Left cardiac atrium (tissue), 4 donors: ENCODE measurements at regions of chr6 and their contacts with region 1.

Region 1: GRCh38 chr6:152863618-152864326 is 113.2 kb downstream of the VIP start:
- DNase-seq: peak; percentile 69
- ATAC-seq: peak; percentile 82 to 83

Region 2: DNA sequence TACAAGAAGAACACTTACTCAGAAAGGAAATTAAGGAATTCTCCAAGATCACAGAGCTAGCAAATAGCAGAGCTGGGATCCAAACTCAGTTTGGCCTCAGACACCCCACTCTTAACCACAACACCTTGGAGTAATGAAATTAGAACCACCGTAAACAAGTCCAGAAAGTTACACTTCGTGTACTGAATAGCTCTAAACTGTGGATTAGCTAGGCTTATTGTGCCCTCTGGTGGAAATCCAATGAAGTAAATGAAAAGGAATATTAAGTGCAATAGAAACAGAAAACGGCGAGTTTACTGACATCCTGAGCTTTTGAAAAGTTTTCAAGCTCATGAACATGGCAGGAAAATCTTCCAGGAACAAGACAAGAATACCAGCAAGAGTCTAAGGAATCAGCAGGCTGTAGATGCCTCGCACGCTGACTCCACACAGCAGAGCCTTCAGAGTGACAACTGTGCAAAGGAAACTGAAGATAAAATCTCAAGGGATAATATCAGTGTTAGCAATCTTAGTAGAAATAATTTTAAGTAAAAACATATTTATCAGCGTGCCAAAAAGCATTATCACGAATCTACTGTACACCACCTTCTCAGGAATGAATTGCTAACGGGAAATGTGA is 84.5 kb after region 1 on chr6:
- intact Hi-C with region 1: loop called (anchors 2 to 5 kb)
- DNase-seq: no peak
- ATAC-seq: peak; percentile 57 to 69

Region 3: DNA sequence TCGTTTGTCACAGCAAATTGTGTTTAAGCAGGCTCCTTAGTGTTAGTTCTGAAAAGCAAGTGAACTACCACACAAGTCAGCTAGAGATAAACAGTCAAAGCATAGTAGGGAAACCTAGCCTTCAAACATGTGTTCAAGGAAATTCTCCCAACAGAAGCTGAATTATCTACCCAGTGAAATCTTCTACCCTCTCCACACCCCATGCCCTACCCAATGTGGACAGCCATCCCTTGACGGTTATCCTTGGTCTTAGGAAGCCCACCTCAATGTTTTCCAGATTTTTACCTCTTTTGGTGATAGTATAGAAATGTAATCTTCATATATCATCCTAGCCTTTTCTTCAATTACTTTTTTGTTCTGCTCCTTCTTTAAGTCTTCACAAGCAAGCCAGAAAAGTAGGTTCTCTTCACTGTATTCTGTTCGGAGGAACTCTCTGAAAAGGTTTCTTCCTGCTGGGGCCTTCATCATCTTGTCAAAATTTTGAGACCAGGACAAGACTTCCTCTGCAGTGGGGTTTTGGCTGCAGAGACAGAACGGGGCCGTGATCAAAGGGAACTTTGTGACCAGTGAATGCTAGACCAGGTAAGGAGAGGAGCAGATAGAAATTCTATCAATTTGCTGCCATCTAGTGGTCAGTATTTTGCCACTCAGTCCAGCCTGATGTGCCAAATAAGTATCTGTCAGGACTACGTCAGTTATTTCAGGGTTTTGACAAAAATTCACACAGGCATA is 160.4 kb after region 1 on chr6:
- intact Hi-C with region 1: loop called (anchors 5 to 10 kb)
- DNase-seq: no peak
- ATAC-seq: peak; percentile 81 to 88